Endothelial cell of umbilical vein (primary cell): ENCODE measurements at regions of chr2 and their contacts with region 1.

Region 1: GRCh38 chr2:9770308-9771100 is 72.8 kb upstream of the TAF1B start:
- DNase-seq: peak; percentile 51
- H3K4me3 ChIP-seq: no peak overlapping the region
- H3K27ac ChIP-seq: no peak overlapping the region
- H3K4me1 ChIP-seq: no peaks in the 10 kb centered on the region
- H3K27me3 ChIP-seq: no peaks in the 10 kb centered on the region
- CTCF ChIP-seq: peak; percentile 68 to 77
- POLR2A ChIP-seq: no peak

Region 2: DNA sequence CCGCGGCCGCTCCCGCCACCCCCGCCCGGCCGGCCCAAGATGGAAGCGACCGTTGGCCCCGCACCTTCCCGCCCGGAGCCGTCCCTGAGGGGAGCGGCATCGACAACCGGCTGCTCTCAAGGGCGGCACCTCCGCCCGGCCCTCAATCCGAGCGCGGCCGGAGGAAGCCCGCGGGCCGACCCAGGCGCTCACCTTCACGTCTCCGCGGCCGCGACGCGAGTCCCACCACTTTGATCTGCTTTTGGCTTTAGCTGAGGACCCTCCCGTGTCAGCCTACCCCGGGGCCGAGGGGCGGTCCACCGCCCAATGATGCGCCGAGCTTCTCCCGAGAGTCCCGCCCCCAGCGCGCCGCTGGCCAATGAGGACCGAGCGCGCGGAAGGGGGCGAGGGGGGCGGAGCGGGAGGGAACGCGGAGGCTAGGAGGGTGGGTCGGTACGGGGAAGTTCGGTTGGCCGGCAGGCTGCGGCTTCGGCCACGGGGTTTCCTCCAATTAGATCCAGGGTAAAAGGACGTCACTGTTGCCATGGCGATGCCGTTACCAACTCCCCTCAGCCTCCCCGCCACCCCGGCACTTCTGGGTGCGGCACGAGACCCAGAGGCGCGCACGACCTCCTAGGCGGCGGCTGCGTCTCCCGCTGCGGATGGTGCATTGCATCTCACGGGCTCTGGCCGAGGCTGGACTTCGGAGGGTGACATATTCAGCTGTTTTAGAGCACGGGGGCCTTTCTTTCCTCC is 139.6 kb before region 1 on chr2 and contains the start of gene YWHAQ:
- CTCF ChIA-PET with region 1: interaction called, 25 read pairs
- POLR2A ChIA-PET with region 1: no interaction called
- dilution Hi-C with region 1: no loop called
- intact Hi-C with region 1: no loop called
- DNase-seq: peak; percentile 99
- H3K4me3 ChIP-seq: peak within 1 kb of the TSS; percentile 64 to 97 (median 89)
- H3K27ac ChIP-seq: peak within 1 kb of the TSS; percentile 51
- H3K4me1 ChIP-seq: peaks cover 22% of the 10 kb centered on the region
- H3K27me3 ChIP-seq: no peaks in the 10 kb centered on the region
- CTCF ChIP-seq: no peak
- POLR2A ChIP-seq: peak; percentile 95
- total RNA-seq, gene YWHAQ: 347 and 456 TPM in 2 replicates

Region 3: GRCh38 chr2:9656270-9656766 is 114.2 kb before region 1 on chr2:
- CTCF ChIA-PET with region 1: interaction called, 18 read pairs
- POLR2A ChIA-PET with region 1: no interaction called
- dilution Hi-C with region 1: no loop called
- intact Hi-C with region 1: no loop called
- DNase-seq: peak; percentile 91
- H3K4me3 ChIP-seq: no peak overlapping the region
- H3K27ac ChIP-seq: peak overlapping the region; percentile 60
- H3K4me1 ChIP-seq: peaks cover 22% of the 10 kb centered on the region
- H3K27me3 ChIP-seq: no peaks in the 10 kb centered on the region
- CTCF ChIP-seq: no peak
- POLR2A ChIP-seq: peak; percentile 45

Region 4: GRCh38 chr2:9782197-9782719 is 11.8 kb after region 1 on chr2:
- CTCF ChIA-PET with region 1: interaction called, 24 read pairs
- POLR2A ChIA-PET with region 1: no interaction called
- dilution Hi-C with region 1: no loop called
- intact Hi-C with region 1: no loop called
- DNase-seq: no peak
- H3K4me3 ChIP-seq: no peak overlapping the region
- H3K27ac ChIP-seq: no peak overlapping the region
- H3K4me1 ChIP-seq: no peaks in the 10 kb centered on the region
- H3K27me3 ChIP-seq: peaks cover under 1 to 4% of the 10 kb centered on the region in 2 experiments
- CTCF ChIP-seq: no peak
- POLR2A ChIP-seq: no peak

Region 5: GRCh38 chr2:9843229-9844035 is 72.9 kb after region 1 on chr2 and contains the start of gene TAF1B:
- CTCF ChIA-PET with region 1: interaction called, 10 read pairs
- POLR2A ChIA-PET with region 1: no interaction called
- dilution Hi-C with region 1: no loop called
- intact Hi-C with region 1: no loop called
- DNase-seq: peak; percentile 96
- H3K4me3 ChIP-seq: peak within 1 kb of the TSS; percentile 56 to 86 (median 84)
- H3K27ac ChIP-seq: peak within 1 kb of the TSS; percentile 78
- H3K4me1 ChIP-seq: peaks cover 28% of the 10 kb centered on the region
- H3K27me3 ChIP-seq: no peaks in the 10 kb centered on the region
- CTCF ChIP-seq: peak in 1 of 2 donors; percentile 42
- POLR2A ChIP-seq: peak; percentile 80
- total RNA-seq, gene TAF1B: 20.1 and 29.4 TPM in 2 replicates

Region 6: DNA sequence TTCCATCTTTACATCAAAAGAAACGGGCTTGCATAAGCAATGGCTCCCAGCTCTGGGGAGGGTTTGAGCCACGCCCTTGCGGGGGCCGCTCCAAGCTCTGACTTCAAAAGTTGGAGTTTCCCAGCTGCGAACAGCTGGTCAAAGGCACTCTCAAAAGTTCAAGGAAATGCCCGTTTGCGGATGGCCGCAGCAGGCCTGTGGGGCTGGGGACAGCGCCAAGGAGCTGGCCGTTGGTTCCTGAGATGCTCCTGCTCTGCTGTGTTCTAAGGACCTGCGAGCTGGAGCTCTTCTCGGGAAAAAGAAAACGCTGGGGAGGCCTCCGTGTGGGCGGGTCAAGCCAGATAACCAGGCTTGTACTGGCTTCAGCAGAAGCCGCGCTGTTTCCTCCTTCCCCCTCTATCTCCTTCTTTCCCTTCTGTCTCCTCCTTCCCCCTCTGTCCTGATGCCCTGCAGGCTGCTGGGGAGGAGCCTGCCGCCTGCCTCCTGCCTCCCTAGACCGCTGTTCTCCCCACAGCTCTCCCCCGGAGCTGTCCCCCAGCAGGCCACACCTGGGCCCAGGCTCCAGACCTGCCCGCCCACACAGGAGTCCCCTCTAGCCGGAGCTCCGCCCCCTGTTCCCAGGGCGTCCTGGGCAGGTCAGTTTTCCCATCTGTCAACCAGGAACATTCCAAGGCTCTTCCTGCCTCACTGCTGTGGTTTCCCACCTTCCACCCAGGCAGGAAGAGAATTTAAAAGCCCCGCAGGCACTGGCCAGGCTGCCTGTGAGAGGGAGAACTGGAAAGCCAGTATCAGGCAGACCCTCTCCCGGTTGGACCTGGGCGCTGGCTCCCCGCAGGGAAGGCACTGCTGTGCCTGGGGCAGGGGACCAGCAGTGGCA is 287.0 kb after region 1 on chr2:
- CTCF ChIA-PET with region 1: interaction called, 10 read pairs
- POLR2A ChIA-PET with region 1: no interaction called
- dilution Hi-C with region 1: no loop called
- intact Hi-C with region 1: no loop called
- DNase-seq: peak; percentile 31
- H3K4me3 ChIP-seq: no peak overlapping the region
- H3K27ac ChIP-seq: no peak overlapping the region
- H3K4me1 ChIP-seq: peaks cover 4% of the 10 kb centered on the region
- H3K27me3 ChIP-seq: no peaks in the 10 kb centered on the region
- CTCF ChIP-seq: no peak
- POLR2A ChIP-seq: no peak

Region 7: GRCh38 chr2:10135296-10136089 is 365.0 kb after region 1 on chr2:
- CTCF ChIA-PET with region 1: no interaction called
- POLR2A ChIA-PET with region 1: no interaction called
- dilution Hi-C with region 1: no loop called
- intact Hi-C with region 1: no loop called
- DNase-seq: no peak
- H3K4me3 ChIP-seq: no peak overlapping the region
- H3K27ac ChIP-seq: no peak overlapping the region
- H3K4me1 ChIP-seq: no peaks in the 10 kb centered on the region
- H3K27me3 ChIP-seq: no peaks in the 10 kb centered on the region
- CTCF ChIP-seq: no peak
- POLR2A ChIP-seq: peak; percentile 60